ENCODE measurements at regions of chr4 and their contacts with region 1.

Region 1: GRCh38 chr4:3765271-3766040 is 729 bp upstream of the ADRA2C start:
- DNase-seq: peak; percentile 35 to 93 (median 70)

Region 2: DNA sequence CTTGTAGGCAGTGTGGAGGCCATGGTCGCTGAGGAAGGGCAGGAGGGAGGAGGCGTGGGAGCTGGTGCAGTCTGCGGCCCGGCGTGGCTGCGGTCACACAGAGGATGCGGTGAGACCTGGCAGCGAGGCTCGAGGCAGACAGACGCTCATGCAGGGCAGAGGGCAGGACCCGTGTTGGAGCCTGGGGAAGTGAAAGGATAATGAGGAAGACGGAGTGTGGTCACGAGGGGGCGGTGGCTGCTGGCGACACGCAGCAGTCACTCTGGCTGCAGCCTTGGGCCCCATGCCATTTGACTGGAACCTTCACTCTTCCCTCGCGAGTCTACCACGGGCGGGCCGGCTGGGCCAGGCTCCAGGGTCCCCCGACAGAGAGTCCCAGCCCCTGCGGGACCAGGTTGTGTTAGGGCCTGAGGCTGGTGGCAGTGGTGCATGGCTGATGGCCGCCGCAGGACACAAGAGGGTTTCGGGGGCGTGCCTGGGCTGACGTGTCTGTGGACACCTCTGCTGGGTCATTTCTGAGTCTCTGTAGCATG is 392.5 kb before region 1 on chr4:
- intact Hi-C with region 1: no loop called
- DNase-seq: peak in 6 of 10 donors; percentile 43 to 92 (median 52)

Region 3: GRCh38 chr4:3871181-3871871 is 105.9 kb after region 1 on chr4:
- intact Hi-C with region 1: loop called (anchors 10 kb)
- DNase-seq: peak in 4 of 10 donors; percentile 43 to 90 (median 87)

Measured in posterior cingulate gyrus (tissue), 11 donors.